ENCODE measurements at regions of chr1 and their contacts with region 1.

Region 1: GRCh38 chr1:236603991-236604904 is at the start of gene HEATR1:
- DNase-seq: peak; percentile 87
- ATAC-seq: peak; percentile 98
- H3K4me3 ChIP-seq: peak within 1 kb of the TSS; percentile 80 to 98
- H3K27ac ChIP-seq: peak within 1 kb of the TSS; percentile 87
- H3K4me1 ChIP-seq: peaks cover 8% of the 10 kb centered on the region; the same call in 1 of the 2 replicates
- H3K27me3 ChIP-seq: no peaks in the 10 kb centered on the region
- CTCF ChIP-seq: no peak
- total RNA-seq, gene HEATR1: 66.5 TPM

Region 2: GRCh38 chr1:236534151-236534651 is 70.0 kb before region 1 on chr1:
- CTCF ChIA-PET with region 1: no interaction called
- POLR2A ChIA-PET with region 1: interaction called, 10 read pairs
- in situ Hi-C with region 1: no loop called
- intact Hi-C with region 1: no loop called
- DNase-seq: no peak
- ATAC-seq: no peak
- H3K4me3 ChIP-seq: no peak overlapping the region
- H3K27ac ChIP-seq: peak overlapping the region; percentile 64
- H3K4me1 ChIP-seq: peaks cover 47% of the 10 kb centered on the region
- H3K27me3 ChIP-seq: no peaks in the 10 kb centered on the region
- CTCF ChIP-seq: no peak

Region 3: GRCh38 chr1:236581528-236581927 is 22.7 kb before region 1 on chr1:
- CTCF ChIA-PET with region 1: no interaction called
- POLR2A ChIA-PET with region 1: no interaction called
- in situ Hi-C with region 1: no loop called
- intact Hi-C with region 1: no loop called
- DNase-seq: no peak
- ATAC-seq: no peak
- H3K4me3 ChIP-seq: no peak overlapping the region
- H3K27ac ChIP-seq: no peak overlapping the region
- H3K4me1 ChIP-seq: no peaks in the 10 kb centered on the region
- H3K27me3 ChIP-seq: no peaks in the 10 kb centered on the region
- CTCF ChIP-seq: no peak

Region 4: GRCh38 chr1:236774926-236775325 is 170.7 kb after region 1 on chr1:
- CTCF ChIA-PET with region 1: interaction called, 3 read pairs
- POLR2A ChIA-PET with region 1: no interaction called
- in situ Hi-C with region 1: no loop called
- intact Hi-C with region 1: loop called (anchors 10 kb)
- DNase-seq: no peak
- ATAC-seq: peak; percentile 95
- H3K4me3 ChIP-seq: no peak overlapping the region
- H3K27ac ChIP-seq: no peak overlapping the region
- H3K4me1 ChIP-seq: no peaks in the 10 kb centered on the region
- H3K27me3 ChIP-seq: no peaks in the 10 kb centered on the region
- CTCF ChIP-seq: peak; percentile 73

Region 5: DNA sequence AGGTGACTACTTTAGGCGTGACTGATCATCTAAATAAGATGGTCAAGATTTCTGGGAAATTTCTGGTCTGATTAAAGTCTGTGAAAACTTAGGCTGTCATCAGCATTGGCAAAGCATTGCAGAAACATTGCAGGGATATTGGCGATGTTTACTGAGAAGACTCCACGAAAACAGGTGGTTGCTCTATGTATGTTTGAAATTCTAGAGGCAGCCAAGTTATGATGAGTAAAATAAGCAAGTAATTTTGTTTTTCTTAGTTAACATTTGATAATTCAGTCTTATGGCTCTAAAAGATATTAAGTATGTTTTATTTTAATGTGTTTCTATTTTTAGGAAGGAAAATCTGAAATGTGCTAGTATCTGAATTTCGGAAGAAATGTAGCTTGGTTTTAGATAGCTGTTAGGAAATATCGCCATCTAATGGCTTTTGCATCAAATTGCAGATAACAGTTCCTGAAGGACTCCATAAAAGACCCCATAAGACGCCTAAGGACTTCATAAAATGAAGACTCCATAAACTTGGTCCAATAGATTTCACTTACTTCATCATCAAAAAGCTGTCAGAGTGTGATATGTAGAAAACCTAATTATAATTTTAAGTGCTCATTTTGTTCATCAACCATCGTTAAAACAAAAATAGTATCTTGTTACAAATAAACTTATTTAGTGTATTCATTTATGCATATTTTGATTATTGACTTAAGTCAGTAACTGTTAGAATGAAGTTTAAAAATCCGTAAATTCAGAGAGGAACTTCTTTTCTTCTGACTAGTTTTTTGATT is 782.3 kb after region 1 on chr1:
- CTCF ChIA-PET with region 1: no interaction called
- POLR2A ChIA-PET with region 1: no interaction called
- in situ Hi-C with region 1: no loop called
- intact Hi-C with region 1: loop called (anchors 2 kb)
- DNase-seq: peak; percentile 38
- ATAC-seq: no peak
- H3K4me3 ChIP-seq: no peak overlapping the region
- H3K27ac ChIP-seq: no peak overlapping the region
- H3K4me1 ChIP-seq: no peaks in the 10 kb centered on the region
- H3K27me3 ChIP-seq: no peaks in the 10 kb centered on the region
- CTCF ChIP-seq: peak; percentile 82; the same call in 1 of the 2 replicates